Activated naive CD4-positive, alpha-beta T cell treated with anti-CD3 and anti-CD28 coated beads for 36 hours (primary cell): ENCODE measurements at regions of chr12 and their contacts with region 1.

Region 1: GRCh38 chr12:56029666-56030293 is 8.9 kb downstream of the IKZF4 start:
- DNase-seq: peak; percentile 65
- H3K4me3 Mint-ChIP-seq: no peak overlapping the region
- H3K27ac Mint-ChIP-seq: no peak overlapping the region
- H3K4me1 Mint-ChIP-seq: peaks cover 24% of the 10 kb centered on the region
- H3K27me3 Mint-ChIP-seq: no peaks in the 10 kb centered on the region

Region 2: DNA sequence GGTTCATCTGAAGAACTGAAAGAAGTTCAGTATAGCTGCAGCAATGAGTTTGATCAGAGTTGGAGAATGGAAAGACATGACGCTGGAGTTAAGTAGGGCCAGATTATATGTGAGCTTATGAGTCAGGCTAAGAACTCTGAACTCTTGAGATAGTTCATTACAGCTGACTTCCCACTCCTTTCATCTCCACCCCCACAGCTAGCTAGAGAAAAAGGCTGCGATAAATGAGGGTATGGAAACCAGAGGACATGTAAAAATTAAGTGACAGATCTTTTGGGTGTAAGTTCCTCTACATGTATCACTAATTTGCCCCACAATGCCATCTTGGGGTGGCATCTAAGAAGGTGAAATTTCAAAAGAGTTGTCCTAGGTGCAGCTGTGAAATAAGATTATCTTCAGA is 130.7 kb before region 1 on chr12:
- CTCF ChIA-PET with region 1: no interaction called
- intact Hi-C with region 1: no loop called
- DNase-seq: peak; percentile 71
- H3K4me3 Mint-ChIP-seq: no peak overlapping the region
- H3K27ac Mint-ChIP-seq: peak overlapping the region; percentile 70
- H3K4me1 Mint-ChIP-seq: peaks cover 13% of the 10 kb centered on the region
- H3K27me3 Mint-ChIP-seq: no peaks in the 10 kb centered on the region

Region 3: GRCh38 chr12:55991110-55991509 is 38.7 kb before region 1 on chr12:
- CTCF ChIA-PET with region 1: interaction called, 90 read pairs
- intact Hi-C with region 1: loop called (anchors 1 kb)
- DNase-seq: no peak
- H3K4me3 Mint-ChIP-seq: no peak overlapping the region
- H3K27ac Mint-ChIP-seq: no peak overlapping the region
- H3K4me1 Mint-ChIP-seq: peaks cover 6% of the 10 kb centered on the region
- H3K27me3 Mint-ChIP-seq: peaks cover under 1% of the 10 kb centered on the region

Region 4: DNA sequence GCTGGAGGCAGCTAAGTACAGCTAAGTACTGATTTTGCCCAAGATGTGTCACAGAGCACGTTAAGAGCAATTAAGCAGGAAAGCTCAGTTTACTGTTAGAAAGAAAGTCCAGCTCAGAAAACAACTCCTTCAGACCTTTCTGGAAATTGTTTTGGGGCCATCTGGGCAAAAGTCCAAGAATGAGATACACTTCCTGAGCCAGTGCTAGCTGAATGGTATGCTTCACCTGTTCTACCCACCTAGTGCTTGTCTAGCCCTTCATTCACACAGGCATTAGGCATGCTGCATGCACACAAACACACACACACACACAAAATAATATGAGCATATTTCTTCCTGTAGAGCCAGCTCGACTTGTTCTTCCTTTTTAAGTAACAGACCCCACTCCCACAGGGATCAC is 15.6 kb before region 1 on chr12:
- CTCF ChIA-PET with region 1: interaction called, 40 read pairs
- intact Hi-C with region 1: no loop called
- DNase-seq: no peak
- H3K4me3 Mint-ChIP-seq: no peak overlapping the region
- H3K27ac Mint-ChIP-seq: no peak overlapping the region
- H3K4me1 Mint-ChIP-seq: peaks cover 7% of the 10 kb centered on the region
- H3K27me3 Mint-ChIP-seq: no peaks in the 10 kb centered on the region